GM18951 (cell line): ENCODE measurements at regions of chr14 and their contacts with region 1.

Region 1: GRCh38 chr14:74249433-74250375 is 10.5 kb downstream of the VSX2 start:
- POLR2A ChIP-seq: no peak

Region 2: GRCh38 chr14:73623493-73624054 is 626.1 kb before region 1 on chr14:
- in situ Hi-C with region 1: no loop called
- POLR2A ChIP-seq: no peak

Region 3: GRCh38 chr14:74109369-74109768 is 140.3 kb before region 1 on chr14:
- in situ Hi-C with region 1: loop called (anchors 5 kb)
- POLR2A ChIP-seq: no peak

Region 4: DNA sequence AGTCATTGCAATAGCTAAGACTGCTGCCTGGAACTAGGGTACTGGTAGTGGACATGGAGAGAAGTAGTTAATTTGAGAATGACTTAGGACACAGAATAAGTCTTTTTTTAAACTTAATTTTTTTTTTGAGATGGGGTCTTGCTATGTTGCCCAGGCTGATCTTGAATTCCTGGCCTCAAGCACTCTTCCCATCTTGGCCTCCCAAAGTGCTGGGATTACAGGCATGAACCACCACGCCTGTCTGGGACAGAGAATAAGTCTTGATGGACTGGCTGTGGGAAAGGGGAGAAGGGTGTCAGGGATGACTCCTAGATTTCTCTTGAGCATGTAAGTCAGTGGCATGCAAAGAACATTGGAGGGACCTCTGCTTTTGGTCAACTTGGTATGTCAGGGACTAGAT is 122.1 kb before region 1 on chr14:
- in situ Hi-C with region 1: no loop called
- POLR2A ChIP-seq: no peak